Activated T-helper 1 cell treated with anti-CD3 and anti-CD28 coated beads, Interleukin-12 subunit alpha, Interleukin-12 subunit beta, Interleukin-2, Interleukin-4 antibody, amounts not matched to agents 30 ng/mL and 10 ng/mL and 1 ng/mL, durations not matched to agents 14 hours and 24 hours and 36 hours (primary cell): ENCODE measurements at regions of chr12 and their contacts with region 1.

Region 1: GRCh38 chr12:54398995-54399793 is 14.7 kb upstream of the ZNF385A start:
- DNase-seq: peak; percentile 75
- H3K4me3 Mint-ChIP-seq: no peak overlapping the region
- H3K27ac Mint-ChIP-seq: peak overlapping the region; percentile 71
- H3K4me1 Mint-ChIP-seq: peaks cover 11% of the 10 kb centered on the region
- H3K27me3 Mint-ChIP-seq: no peaks in the 10 kb centered on the region

Region 2: GRCh38 chr12:54411391-54412241 is 12.4 kb after region 1 on chr12:
- intact Hi-C with region 1: loop called (anchors 1 kb)
- DNase-seq: peak; percentile 44
- H3K4me3 Mint-ChIP-seq: peak overlapping the region; percentile 50
- H3K27ac Mint-ChIP-seq: peak overlapping the region; percentile 87
- H3K4me1 Mint-ChIP-seq: peaks cover 51% of the 10 kb centered on the region
- H3K27me3 Mint-ChIP-seq: no peaks in the 10 kb centered on the region

Region 3: DNA sequence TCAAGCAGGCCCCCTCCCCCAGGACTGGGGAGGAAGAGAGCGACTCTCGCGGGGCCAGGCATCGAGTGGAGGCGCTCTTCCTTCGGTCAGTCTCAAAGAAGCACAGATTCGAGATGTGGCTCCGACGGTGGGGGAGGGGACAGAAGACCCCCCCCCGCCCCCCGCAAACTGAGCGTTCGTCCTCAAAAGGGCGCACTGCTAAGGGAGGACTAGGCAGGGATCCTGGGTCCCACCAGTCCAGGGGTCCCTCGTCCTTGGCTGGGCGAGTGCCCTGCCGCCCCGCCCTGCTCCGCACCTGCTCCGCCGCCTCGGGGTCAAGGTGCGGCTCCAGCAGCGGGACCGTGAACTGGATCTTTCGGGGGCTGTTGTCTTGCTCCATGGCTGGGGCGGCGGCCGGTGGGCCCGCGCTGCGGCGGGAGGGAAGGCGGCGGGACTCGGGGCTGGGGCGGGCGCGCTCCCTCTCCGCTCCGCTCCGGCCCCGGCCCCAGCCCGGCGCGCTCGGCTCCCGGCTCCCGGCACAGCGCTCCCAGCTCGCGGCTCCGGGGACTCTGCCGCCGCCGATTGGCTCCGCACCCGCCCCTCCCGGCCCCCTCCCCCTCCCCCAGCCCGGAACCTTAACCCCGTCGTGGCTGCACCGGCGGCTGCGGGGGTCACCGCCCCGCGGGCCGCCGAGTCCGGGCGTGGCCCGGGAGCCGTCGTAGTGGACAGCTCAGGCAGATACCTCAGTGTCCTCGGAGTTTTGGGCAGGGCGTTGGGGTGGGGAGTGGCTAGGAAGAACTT is 189.1 kb after region 1 on chr12 and contains the start of gene PPP1R1A:
- intact Hi-C with region 1: no loop called
- DNase-seq: no peak
- H3K4me3 Mint-ChIP-seq: peak within 1 kb of the TSS; percentile 62
- H3K27ac Mint-ChIP-seq: no peak within 1 kb of the TSS
- H3K4me1 Mint-ChIP-seq: no peaks in the 10 kb centered on the region
- H3K27me3 Mint-ChIP-seq: peaks cover 65% of the 10 kb centered on the region
- total RNA-seq, gene PPP1R1A: 0.29 TPM in 1 of 2 replicates, not detected in the other

Region 4: GRCh38 chr12:54716261-54716660 is 317.1 kb after region 1 on chr12:
- intact Hi-C with region 1: no loop called
- DNase-seq: no peak
- H3K4me3 Mint-ChIP-seq: no peak overlapping the region
- H3K27ac Mint-ChIP-seq: no peak overlapping the region
- H3K4me1 Mint-ChIP-seq: no peaks in the 10 kb centered on the region
- H3K27me3 Mint-ChIP-seq: peaks cover 21% of the 10 kb centered on the region

Region 5: DNA sequence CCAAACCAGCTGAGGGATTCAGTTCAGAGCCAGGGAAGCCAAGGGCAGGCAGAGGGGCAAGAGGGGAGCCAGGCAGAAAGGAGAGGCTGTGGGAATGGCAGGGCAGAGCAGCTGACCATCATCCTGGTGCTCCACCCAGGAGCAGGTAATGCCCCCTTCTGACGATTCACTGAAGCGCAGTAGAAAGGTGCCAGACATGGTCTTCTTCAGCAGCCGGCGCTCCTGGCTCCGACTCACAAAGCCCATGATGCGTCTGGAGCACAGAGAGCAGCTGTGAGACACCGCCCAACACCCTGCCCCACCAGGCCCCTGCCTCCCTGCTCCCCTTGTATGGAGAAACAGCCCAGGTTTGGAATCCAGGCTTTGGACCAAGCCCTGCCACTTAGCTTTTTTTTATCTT is 1947.5 kb after region 1 on chr12:
- intact Hi-C with region 1: no loop called
- DNase-seq: no peak
- H3K4me3 Mint-ChIP-seq: no peak overlapping the region
- H3K27ac Mint-ChIP-seq: no peak overlapping the region
- H3K4me1 Mint-ChIP-seq: peaks cover under 1% of the 10 kb centered on the region
- H3K27me3 Mint-ChIP-seq: no peaks in the 10 kb centered on the region